ENCODE measurements at regions of chr15 and their contacts with region 1.

Region 1: DNA sequence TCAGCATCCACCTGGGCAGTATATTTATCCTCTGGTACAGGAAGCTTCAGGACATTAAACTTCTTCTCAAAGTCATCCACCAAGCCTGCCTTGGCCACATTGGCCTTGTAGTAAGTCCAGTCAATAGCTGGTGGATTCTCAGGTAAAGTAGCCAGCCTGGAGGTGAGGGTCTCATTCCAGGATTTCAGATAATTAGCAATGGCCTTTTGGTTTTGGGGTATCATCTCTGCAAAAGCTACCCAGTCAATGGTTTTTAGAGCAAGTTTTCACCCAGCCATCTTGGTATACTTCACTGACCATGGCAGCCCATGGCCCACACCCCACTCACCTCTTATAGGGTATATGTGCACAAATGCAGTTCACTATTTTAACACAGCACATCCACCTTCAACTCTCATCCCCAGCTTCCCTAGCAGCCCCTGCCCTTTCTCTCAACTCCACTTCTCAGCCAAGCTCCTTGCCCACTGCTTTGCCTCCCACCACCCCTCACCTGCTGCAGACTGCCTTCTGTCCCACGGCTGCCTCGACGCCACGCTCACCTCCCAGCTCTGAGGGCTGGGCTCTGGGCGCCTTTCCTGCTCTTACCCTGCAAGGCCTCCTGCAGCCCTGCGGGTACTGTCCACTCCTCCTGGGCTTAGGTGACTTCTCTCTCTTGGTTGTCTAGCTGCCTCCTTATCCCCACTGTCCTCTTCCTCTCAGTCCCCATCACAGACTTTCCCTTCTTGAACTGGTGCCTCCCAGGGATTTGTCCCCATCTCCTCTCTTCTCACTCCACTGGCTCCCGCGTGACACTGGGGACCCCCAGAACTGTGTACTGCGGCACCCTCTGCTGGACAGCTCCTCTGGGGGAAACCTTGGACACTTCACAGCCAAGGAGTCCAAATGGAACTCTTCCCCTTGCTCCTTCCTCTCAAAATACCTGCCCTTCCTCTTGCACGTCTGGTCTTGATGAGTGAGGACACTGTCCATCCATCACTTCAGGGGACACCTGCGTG is 1.7 kb upstream of the TGM5 start:
- DNase-seq: peak; percentile 11
- ATAC-seq: peak; percentile 67
- H3K4me3 ChIP-seq: no peak overlapping the region
- H3K27ac ChIP-seq: no peak overlapping the region
- H3K4me1 ChIP-seq: no peaks in the 10 kb centered on the region
- H3K27me3 ChIP-seq: peaks cover 0 to 24% of the 10 kb centered on the region in 2 experiments; a peak in 3 of 5 replicates
- CTCF ChIP-seq: peak; percentile 63
- EP300 ChIP-seq: no peak
- POLR2A ChIP-seq: no peak
- RAD21 ChIP-seq: peak; percentile 31; the same call in 1 of the 2 replicates

Region 2: GRCh38 chr15:42612367-42612912 is 656.0 kb before region 1 on chr15:
- CTCF ChIA-PET with region 1: no interaction called
- POLR2A ChIA-PET with region 1: no interaction called
- in situ Hi-C with region 1: no loop called
- intact Hi-C with region 1: loop called (anchors 5 kb)
- DNase-seq: no peak
- ATAC-seq: no peak
- H3K4me3 ChIP-seq: no peak overlapping the region
- H3K27ac ChIP-seq: no peak overlapping the region
- H3K4me1 ChIP-seq: no peaks in the 10 kb centered on the region
- H3K27me3 ChIP-seq: no peaks in the 10 kb centered on the region
- CTCF ChIP-seq: no peak
- EP300 ChIP-seq: no peak
- POLR2A ChIP-seq: no peak
- RAD21 ChIP-seq: no peak

Region 3: DNA sequence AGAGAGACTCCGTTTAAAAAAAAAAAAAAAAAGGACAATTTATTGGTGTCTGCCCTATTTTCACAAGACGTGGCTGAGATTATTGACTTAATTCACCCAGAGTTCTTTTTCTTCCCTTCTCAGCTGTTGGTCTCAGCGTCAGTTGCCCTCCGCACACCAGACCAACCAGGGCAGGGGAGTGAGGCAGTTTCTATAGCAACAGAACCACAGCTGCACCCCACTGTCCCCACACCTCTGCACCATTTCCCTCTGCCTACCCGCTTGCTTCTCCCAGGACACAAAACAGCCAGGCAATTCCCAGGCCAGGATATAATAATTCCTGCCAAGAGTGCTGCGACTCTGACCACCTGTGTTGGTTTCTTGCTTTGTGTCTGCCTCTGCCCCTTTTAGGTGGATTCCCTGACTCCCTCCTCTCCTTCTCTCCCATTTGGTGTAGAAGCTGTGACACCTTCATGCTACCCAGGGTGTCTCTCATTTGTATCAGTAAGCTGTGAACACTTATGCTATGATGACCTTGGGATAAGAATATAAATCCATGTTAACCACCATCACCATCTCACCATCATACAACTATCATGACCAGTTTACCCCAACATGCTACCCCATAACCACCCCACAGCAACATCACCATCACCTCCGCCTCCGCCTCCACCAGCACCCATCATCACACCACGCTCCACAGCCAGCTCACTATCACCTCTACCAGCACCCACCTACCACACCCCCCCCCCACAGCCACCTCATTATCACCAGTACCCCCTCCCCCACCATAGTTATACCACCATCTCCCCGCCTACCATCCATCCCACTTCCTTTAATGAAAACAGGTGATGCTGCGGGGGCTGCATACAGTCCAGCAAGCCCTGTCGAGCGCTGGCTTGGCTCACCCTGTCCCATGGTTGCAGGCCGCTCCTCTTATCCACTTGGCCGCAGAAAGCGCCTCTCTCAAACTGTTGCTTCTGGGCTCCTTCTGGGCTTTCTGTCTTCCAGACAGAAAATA is 48.2 kb before region 1 on chr15:
- CTCF ChIA-PET with region 1: interaction called, 6 read pairs
- POLR2A ChIA-PET with region 1: no interaction called
- in situ Hi-C with region 1: no loop called
- intact Hi-C with region 1: loop called (anchors 5 kb)
- DNase-seq: no peak
- ATAC-seq: no peak
- H3K4me3 ChIP-seq: no peak overlapping the region
- H3K27ac ChIP-seq: no peak overlapping the region
- H3K4me1 ChIP-seq: 0 out of 2 replicates have a peak, but pooled peaks cover 11% of the 10 kb centered on the region
- H3K27me3 ChIP-seq: peaks cover 0 to 7% of the 10 kb centered on the region in 2 experiments; a peak in 2 of 5 replicates
- CTCF ChIP-seq: no peak
- EP300 ChIP-seq: no peak
- POLR2A ChIP-seq: no peak
- RAD21 ChIP-seq: no peak